ENCODE measurements at regions of chr2 and their contacts with region 1.

Region 1: DNA sequence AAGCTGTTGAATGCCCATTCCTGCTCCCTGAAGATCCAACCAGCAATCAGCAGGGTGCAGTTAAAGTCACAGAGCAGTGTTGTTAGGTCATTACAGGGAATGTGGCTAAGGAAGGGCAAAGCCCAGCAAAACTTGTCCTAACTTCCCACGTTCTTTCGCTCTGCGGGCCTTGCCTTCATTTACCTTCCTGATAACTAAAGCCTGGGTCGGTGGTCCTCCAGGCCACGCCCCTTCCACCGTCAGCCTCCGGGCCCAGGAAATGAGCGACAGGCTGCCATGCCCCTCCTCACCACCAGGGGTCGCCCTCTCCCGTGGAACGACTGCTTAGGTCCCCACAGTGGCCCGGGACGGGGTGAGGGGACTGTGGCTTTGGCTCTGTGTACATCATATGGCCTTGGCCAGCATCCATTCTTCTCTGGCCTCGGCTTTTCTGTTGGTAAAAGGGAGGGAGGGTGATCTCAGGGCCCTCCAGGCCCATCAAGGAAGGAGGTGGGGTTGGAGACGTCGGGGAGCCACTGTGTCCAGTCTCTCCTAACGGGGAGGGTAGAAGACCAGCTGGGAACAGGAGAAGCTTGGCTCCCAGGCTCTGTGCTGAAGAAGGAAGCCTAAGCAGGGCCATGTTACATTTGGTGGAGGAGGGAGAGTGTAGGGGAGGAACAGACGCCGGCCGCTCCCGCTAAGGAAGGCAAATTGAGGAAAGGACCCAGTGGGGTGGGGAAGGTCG is 2.2 kb downstream of the SH2D6 start:
- DNase-seq: peak; percentile 80 to 89 (median 86)
- H3K4me3 ChIP-seq: peak overlapping the region in 3 of 7 experiments; percentile 44 to 73 (median 54)
- H3K27ac ChIP-seq: peak overlapping the region in 1 of 2 experiments; percentile 63
- H3K4me1 ChIP-seq: peaks cover 1 to 52% (median 34%) of the 10 kb centered on the region in 4 experiments
- H3K27me3 ChIP-seq: no peaks in the 10 kb centered on the region

Region 2: DNA sequence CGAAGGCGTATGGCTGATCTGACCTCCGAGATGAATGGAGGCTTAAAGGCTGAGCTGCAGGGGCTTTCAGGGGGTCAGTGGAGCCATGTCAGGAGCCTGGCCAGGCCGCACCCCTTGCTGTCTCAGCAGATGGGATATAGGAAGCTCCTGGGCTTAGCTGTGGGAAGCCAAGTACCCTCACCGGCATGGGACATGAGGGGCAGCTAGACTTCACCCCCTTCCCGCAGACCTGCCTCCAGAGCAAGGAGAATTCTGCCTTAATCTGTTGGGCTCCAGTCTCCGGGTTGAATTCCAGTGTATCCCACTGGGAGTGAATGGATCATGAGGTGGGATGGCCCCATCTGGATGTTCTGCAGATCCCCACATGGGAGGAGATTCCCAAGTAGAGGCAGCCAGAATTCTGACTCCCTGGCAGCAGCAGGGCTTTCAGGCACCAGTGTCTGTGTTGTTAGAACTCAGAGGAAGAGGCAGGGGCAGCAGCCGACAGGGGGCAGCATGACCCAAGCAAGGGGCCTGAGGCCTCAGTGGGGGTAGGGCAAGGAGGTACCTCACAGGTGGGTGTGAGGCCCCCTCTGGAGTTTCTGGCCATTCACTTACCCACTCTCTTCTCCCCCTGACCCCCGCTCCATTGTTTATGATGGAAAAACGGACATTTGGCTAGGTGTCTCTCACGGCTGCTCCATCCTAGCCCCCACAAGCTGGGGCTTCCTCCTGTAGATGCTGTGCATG is 29.6 kb before region 1 on chr2:
- CTCF ChIA-PET with region 1: interaction called, 68 read pairs
- POLR2A ChIA-PET with region 1: interaction called, 4 read pairs
- DNase-seq: peak; percentile 61 to 75 (median 68)
- H3K4me3 ChIP-seq: no peak overlapping the region
- H3K27ac ChIP-seq: no peak overlapping the region
- H3K4me1 ChIP-seq: peaks cover 0 to 5% (median under 1%) of the 10 kb centered on the region in 4 experiments
- H3K27me3 ChIP-seq: no peaks in the 10 kb centered on the region

Region 3: DNA sequence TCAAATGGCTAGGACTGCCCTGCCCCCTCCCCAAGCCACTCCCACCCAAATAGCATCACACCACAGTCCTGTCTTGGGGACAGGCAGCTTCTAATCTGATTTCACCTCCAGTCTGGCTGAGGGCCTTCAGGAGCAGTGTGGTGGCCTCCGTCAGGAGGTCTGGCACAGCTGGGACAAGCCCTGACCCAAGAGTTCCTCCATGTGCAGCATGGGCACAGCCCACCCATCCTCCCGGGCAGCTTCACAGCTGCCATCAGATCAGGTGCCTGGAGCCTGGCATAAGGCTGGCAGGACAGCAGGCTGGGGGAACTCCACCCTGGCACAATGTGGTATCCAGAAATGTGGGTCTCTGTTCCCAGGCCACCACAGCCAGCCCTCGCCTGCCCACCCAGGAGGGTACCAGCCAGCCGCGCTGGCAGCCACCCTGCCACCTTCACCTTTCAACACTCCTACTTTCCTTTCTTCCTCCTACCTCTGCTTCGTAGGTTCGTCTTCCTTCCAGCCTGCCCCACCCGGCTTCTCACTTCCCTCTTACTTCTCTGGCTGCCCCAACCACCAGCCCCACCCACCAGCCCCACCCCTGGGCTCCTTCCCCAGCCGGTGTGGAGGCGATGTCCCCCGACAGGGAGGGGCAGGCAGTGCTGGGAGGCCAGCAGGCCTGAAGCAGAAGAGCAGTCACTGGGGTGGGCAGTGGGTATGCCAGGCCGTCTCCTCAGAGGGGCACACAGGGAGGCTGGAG is 10.7 kb before region 1 on chr2 and contains the start of gene CAPG:
- CTCF ChIA-PET with region 1: interaction called, 29 read pairs
- POLR2A ChIA-PET with region 1: interaction called, 6 read pairs
- DNase-seq: peak in 2 of 3 donors; percentile 63 to 74
- H3K4me3 ChIP-seq: peak within 1 kb of the TSS in 5 of 7 experiments; percentile 32 to 69 (median 50)
- H3K27ac ChIP-seq: no peak within 1 kb of the TSS
- H3K4me1 ChIP-seq: peaks cover 24 to 92% (median 86%) of the 10 kb centered on the region in 4 experiments
- H3K27me3 ChIP-seq: no peaks in the 10 kb centered on the region

Region 4: GRCh38 chr2:85437488-85438284 is 17.0 kb after region 1 on chr2:
- CTCF ChIA-PET with region 1: interaction called, 11 read pairs
- POLR2A ChIA-PET with region 1: interaction called, 3 read pairs
- DNase-seq: peak; percentile 92 to 95 (median 95)
- H3K4me3 ChIP-seq: peak overlapping the region in 4 of 7 experiments; percentile 36 to 47 (median 38)
- H3K27ac ChIP-seq: peak overlapping the region; percentile 80 to 90
- H3K4me1 ChIP-seq: peaks cover 3 to 84% (median 66%) of the 10 kb centered on the region in 4 experiments
- H3K27me3 ChIP-seq: no peaks in the 10 kb centered on the region

Region 5: DNA sequence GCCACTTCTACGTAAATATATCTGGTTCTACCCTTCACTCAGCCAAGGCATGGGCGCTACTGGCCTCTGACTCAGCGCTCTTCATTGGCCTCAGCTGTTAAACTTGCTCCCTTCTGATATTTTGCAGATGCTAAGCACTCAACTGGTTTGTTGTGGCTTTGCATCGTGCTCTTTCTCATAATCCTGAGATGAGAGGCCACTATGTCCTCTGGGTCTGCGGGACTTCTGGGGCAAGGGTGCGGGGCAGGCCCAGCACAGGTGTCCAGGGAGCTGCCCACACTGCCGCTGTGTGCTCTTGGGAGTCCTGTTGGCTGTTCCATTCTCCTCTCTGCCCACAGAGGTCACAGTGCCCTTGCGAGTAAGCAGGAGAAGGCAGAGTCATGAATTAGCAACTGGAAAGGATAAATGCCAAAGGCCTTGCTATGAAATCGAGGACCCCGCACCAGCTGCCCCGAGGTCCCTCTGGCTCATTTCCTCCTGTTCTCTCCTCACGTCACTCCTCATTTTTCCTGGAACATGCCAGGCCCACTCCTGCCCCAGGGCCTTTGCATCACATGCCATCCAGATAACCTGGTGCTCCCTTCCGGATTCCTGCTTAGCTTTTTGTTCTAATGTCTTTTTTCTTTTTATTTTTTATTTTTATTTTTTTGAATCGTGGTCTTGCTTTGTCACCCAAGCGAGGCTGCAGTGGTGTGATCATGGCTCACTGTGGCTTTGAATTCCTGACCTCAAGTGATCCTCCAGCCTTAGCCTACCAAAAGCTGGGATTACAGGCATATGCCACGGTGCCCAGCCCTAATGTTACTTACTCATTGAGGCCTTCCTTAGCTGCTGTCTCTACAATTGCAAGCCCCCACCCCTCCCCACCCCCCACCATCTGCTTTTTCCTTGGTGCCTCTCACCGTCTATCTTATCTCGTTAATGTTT is 83.4 kb after region 1 on chr2:
- CTCF ChIA-PET with region 1: interaction called, 11 read pairs
- POLR2A ChIA-PET with region 1: no interaction called
- DNase-seq: peak in 2 of 3 donors; percentile 27 to 42
- H3K4me3 ChIP-seq: no peak overlapping the region
- H3K27ac ChIP-seq: no peak overlapping the region
- H3K4me1 ChIP-seq: peaks cover 0 to 59% (median 29%) of the 10 kb centered on the region in 4 experiments
- H3K27me3 ChIP-seq: no peaks in the 10 kb centered on the region

Region 6: GRCh38 chr2:85561317-85561979 is 140.8 kb after region 1 on chr2 and contains the start of gene GGCX:
- CTCF ChIA-PET with region 1: interaction called, 584 read pairs
- POLR2A ChIA-PET with region 1: no interaction called
- DNase-seq: peak; percentile 96 to 98 (median 98)
- H3K4me3 ChIP-seq: peak within 1 kb of the TSS; percentile 89 to 97 (median 91)
- H3K27ac ChIP-seq: peak within 1 kb of the TSS; percentile 86 to 93
- H3K4me1 ChIP-seq: peaks cover 6 to 25% (median 14%) of the 10 kb centered on the region in 4 experiments
- H3K27me3 ChIP-seq: no peaks in the 10 kb centered on the region